SK-N-SH (cell line): ENCODE measurements at regions of chr14 and their contacts with region 1.

Region 1: GRCh38 chr14:88189417-88190191 is 133.5 kb downstream of the KCNK10 start:
- DNase-seq: peak; percentile 72
- H3K4me3 ChIP-seq: peak overlapping the region in 1 of 2 experiments; percentile 44; a peak in 1 of 4 replicates
- H3K27ac ChIP-seq: no peak overlapping the region
- H3K4me1 ChIP-seq: no peaks in the 10 kb centered on the region; a peak in 1 of 4 replicates
- H3K27me3 ChIP-seq: no peaks in the 10 kb centered on the region; the same call in 1 of the 2 replicates
- CTCF ChIP-seq: peak; percentile 70
- EP300 ChIP-seq: no peak
- RAD21 ChIP-seq: peak; percentile 85

Region 2: GRCh38 chr14:87944987-87945604 is 244.5 kb before region 1 on chr14:
- CTCF ChIA-PET with region 1: interaction called, 25 read pairs
- POLR2A ChIA-PET with region 1: no interaction called
- DNase-seq: peak; percentile 3
- H3K4me3 ChIP-seq: no peak overlapping the region; a peak in 1 of 4 replicates
- H3K27ac ChIP-seq: no peak overlapping the region
- H3K4me1 ChIP-seq: no peaks in the 10 kb centered on the region
- H3K27me3 ChIP-seq: no peaks in the 10 kb centered on the region
- CTCF ChIP-seq: peak; percentile 80
- EP300 ChIP-seq: no peak
- RAD21 ChIP-seq: peak; percentile 74

Region 3: DNA sequence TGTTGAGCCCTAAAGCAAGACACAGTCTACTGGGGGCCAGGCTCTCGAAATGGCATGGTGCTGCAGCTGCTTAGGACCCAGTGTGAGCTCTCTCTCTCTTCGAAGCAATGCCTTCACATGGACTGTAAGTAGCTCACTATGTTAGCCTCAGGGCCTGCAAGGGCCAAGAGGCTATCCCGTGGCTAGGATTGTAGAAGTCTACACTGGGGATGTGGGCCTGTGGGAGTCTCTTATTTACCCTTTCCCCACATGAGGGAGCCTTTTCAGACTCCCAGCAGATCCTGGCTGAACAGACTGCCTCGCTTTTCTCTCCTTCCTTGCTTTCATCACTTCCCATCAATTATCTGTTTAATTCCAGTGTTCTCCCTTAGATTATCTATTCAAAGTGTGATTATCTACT is 83.2 kb before region 1 on chr14:
- CTCF ChIA-PET with region 1: no interaction called
- POLR2A ChIA-PET with region 1: no interaction called
- DNase-seq: no peak
- H3K4me3 ChIP-seq: no peak overlapping the region
- H3K27ac ChIP-seq: no peak overlapping the region
- H3K4me1 ChIP-seq: no peaks in the 10 kb centered on the region
- H3K27me3 ChIP-seq: no peaks in the 10 kb centered on the region
- CTCF ChIP-seq: no peak
- EP300 ChIP-seq: no peak
- RAD21 ChIP-seq: no peak

Region 4: GRCh38 chr14:88168498-88169165 is 21.0 kb before region 1 on chr14:
- CTCF ChIA-PET with region 1: interaction called, 19 read pairs
- POLR2A ChIA-PET with region 1: no interaction called
- DNase-seq: peak; percentile 57
- H3K4me3 ChIP-seq: no peak overlapping the region
- H3K27ac ChIP-seq: no peak overlapping the region
- H3K4me1 ChIP-seq: no peaks in the 10 kb centered on the region
- H3K27me3 ChIP-seq: no peaks in the 10 kb centered on the region
- CTCF ChIP-seq: peak; percentile 67
- EP300 ChIP-seq: no peak
- RAD21 ChIP-seq: peak; percentile 62

Region 5: DNA sequence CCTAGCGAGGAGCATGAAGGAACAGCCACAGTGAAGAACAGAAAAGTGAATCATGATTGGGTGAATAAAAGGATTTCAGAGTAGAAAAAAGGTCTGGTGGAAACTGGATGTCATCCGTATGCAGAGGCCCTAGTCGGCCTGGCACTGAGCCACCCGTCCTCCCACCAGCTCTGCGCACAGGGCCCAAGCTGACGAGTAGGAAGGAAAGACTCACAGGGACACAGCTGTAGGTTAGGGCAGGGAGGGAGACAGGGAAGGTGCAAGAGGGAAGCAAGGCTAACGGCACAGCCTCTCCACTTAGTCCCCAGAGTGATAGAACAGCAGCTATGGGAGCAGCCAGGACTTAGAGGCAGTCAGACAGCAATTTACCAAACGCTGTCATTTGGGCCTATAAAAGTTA is 20.8 kb after region 1 on chr14:
- CTCF ChIA-PET with region 1: interaction called, 10 read pairs
- POLR2A ChIA-PET with region 1: no interaction called
- DNase-seq: no peak
- H3K4me3 ChIP-seq: no peak overlapping the region
- H3K27ac ChIP-seq: no peak overlapping the region
- H3K4me1 ChIP-seq: no peaks in the 10 kb centered on the region
- H3K27me3 ChIP-seq: no peaks in the 10 kb centered on the region
- CTCF ChIP-seq: no peak
- EP300 ChIP-seq: no peak
- RAD21 ChIP-seq: no peak

Region 6: DNA sequence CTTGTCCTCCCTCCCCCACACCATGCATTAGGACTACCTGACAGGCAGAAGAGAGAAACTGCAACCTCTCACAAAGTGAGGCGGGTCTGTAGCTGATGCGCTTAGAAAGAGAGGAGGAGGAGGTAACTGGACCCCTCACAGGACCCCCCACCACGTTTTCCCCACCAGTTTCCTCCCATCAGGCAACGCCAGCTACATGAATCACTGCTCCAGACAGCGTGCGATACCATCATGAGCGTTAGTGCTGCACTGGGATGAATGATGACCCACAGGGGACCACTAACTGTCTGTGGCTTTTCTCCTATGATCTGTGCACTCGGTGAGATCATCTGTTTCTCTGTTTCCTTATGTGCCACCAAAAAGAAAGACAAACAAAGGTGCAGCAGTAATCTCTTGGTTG is 55.7 kb after region 1 on chr14:
- CTCF ChIA-PET with region 1: interaction called, 12 read pairs
- POLR2A ChIA-PET with region 1: no interaction called
- DNase-seq: peak; percentile 17
- H3K4me3 ChIP-seq: no peak overlapping the region
- H3K27ac ChIP-seq: no peak overlapping the region
- H3K4me1 ChIP-seq: no peaks in the 10 kb centered on the region; a peak in 1 of 4 replicates
- H3K27me3 ChIP-seq: no peaks in the 10 kb centered on the region
- CTCF ChIP-seq: no peak
- EP300 ChIP-seq: no peak
- RAD21 ChIP-seq: no peak

Region 7: GRCh38 chr14:88359500-88359899 is 169.9 kb after region 1 on chr14:
- CTCF ChIA-PET with region 1: interaction called, 15 read pairs
- POLR2A ChIA-PET with region 1: no interaction called
- DNase-seq: no peak
- H3K4me3 ChIP-seq: no peak overlapping the region
- H3K27ac ChIP-seq: no peak overlapping the region
- H3K4me1 ChIP-seq: no peaks in the 10 kb centered on the region
- H3K27me3 ChIP-seq: no peaks in the 10 kb centered on the region
- CTCF ChIP-seq: no peak
- EP300 ChIP-seq: no peak
- RAD21 ChIP-seq: no peak